ENCODE measurements at regions of chr16 and their contacts with region 1.

Region 1: DNA sequence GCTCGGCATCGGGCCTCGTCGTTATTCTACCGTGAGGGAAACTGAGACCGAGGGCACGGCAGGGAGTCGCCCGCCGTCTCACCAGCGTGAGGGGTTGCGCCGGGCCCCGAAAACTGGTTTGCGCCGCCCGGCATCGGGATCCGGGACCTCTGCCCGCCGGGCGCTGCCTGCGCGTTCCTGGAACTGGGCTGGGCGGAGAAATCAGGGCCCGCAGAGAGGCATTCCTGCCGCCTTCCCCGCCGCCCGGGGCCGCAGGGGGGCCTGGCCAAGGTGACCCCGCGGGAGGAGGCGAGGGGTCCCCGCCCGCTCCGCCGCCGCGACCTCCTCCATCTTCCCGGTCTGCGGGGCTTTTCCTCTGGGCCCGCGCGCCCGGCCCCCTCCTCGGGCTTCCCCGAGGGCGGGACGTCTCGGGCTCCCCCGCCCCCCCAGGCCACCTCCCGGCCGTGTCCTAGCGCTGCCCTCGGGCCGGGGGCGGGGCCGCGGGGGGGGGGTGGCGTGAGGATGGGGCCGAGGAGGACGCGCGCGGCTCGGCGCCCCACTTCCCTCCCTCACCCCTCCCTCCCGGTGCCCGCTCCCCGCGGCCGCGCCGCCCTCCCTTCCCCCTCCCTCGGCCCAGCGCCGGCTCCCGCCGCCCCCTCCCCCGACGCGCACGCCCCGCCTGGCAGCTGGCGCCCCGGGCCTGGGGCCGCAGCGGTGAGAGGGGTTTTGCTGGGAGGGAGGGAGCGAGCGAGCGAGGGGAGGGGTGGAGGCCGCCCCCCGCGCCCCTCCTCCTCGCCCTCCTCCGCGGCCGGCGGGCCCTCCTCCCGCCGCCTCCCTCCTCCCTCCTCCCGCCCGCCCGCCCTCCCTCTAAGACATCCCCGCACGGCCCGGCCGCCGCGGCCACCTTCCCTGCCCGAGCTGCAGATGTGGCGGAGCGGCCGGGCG is at the start of gene GLIS2:
- DNase-seq: peak; percentile 59 to 80 (median 76)
- ATAC-seq: peak; percentile 63
- H3K4me3 ChIP-seq: peak within 1 kb of the TSS; percentile 1 to 31
- H3K27ac ChIP-seq: peak within 1 kb of the TSS; percentile 74 to 91 (median 88)
- H3K4me1 ChIP-seq: peaks cover 63% of the 10 kb centered on the region
- H3K27me3 ChIP-seq: no peaks in the 10 kb centered on the region
- CTCF ChIP-seq: peak in 1 of 7 experiments; percentile 8
- POLR2A ChIP-seq: peak; percentile 49 to 71 (median 69)
- total RNA-seq, gene GLIS2: 6.0 to 6.3 TPM

Region 2: GRCh38 chr16:4271176-4272066 is 44.0 kb before region 1 on chr16:
- intact Hi-C with region 1: loop called (anchors 5 kb)
- DNase-seq: peak; percentile 92 to 96 (median 95)
- ATAC-seq: peak; percentile 80
- H3K4me3 ChIP-seq: peak overlapping the region; percentile 98 to 99
- H3K27ac ChIP-seq: peak overlapping the region; percentile 85 to 94 (median 88)
- H3K4me1 ChIP-seq: peaks cover 37% of the 10 kb centered on the region
- H3K27me3 ChIP-seq: no peaks in the 10 kb centered on the region
- CTCF ChIP-seq: peak in 2 of 7 experiments; percentile 13 to 31
- POLR2A ChIP-seq: peak; percentile 57 to 67 (median 63)

Measured in body of pancreas (tissue), 4 donors.